ENCODE measurements at regions of chr11 and their contacts with region 1.

Region 1: GRCh38 chr11:125990244-125990643 is 44.4 kb downstream of the VSIG10L2 start:
- DNase-seq: no peak
- ATAC-seq: no peak

Region 2: GRCh38 chr11:127334466-127334865 is 1344.2 kb after region 1 on chr11:
- intact Hi-C with region 1: loop called in 1 of 2 experiments (anchors 10 kb)
- DNase-seq: no peak
- ATAC-seq: no peak

Measured in left colon (tissue), 2 donors.